Breast epithelium (tissue), 4 donors: ENCODE measurements at regions of chr20 and their contacts with region 1.

Region 1: GRCh38 chr20:44750081-44750805 is 4.6 kb downstream of the KCNK15 start:
- DNase-seq: no peak
- H3K4me3 ChIP-seq: no peak overlapping the region
- H3K27ac ChIP-seq: no peak overlapping the region
- H3K4me1 ChIP-seq: peaks cover 0 to 10% of the 10 kb centered on the region in 2 donors
- H3K27me3 ChIP-seq: peaks cover 0 to 13% of the 10 kb centered on the region in 2 donors
- CTCF ChIP-seq: no peak
- POLR2A ChIP-seq: no peak

Region 2: GRCh38 chr20:43229696-43230095 is 1520.5 kb before region 1 on chr20:
- intact Hi-C with region 1: no loop called
- DNase-seq: no peak
- H3K4me3 ChIP-seq: no peak overlapping the region
- H3K27ac ChIP-seq: no peak overlapping the region
- H3K4me1 ChIP-seq: no peaks in the 10 kb centered on the region
- H3K27me3 ChIP-seq: no peaks in the 10 kb centered on the region
- CTCF ChIP-seq: no peak
- POLR2A ChIP-seq: no peak

Region 3: GRCh38 chr20:43349846-43350245 is 1400.4 kb before region 1 on chr20:
- intact Hi-C with region 1: no loop called
- DNase-seq: no peak
- H3K4me3 ChIP-seq: no peak overlapping the region
- H3K27ac ChIP-seq: no peak overlapping the region
- H3K4me1 ChIP-seq: no peaks in the 10 kb centered on the region
- H3K27me3 ChIP-seq: peaks cover 0 to 4% of the 10 kb centered on the region in 2 donors
- CTCF ChIP-seq: no peak
- POLR2A ChIP-seq: no peak

Region 4: DNA sequence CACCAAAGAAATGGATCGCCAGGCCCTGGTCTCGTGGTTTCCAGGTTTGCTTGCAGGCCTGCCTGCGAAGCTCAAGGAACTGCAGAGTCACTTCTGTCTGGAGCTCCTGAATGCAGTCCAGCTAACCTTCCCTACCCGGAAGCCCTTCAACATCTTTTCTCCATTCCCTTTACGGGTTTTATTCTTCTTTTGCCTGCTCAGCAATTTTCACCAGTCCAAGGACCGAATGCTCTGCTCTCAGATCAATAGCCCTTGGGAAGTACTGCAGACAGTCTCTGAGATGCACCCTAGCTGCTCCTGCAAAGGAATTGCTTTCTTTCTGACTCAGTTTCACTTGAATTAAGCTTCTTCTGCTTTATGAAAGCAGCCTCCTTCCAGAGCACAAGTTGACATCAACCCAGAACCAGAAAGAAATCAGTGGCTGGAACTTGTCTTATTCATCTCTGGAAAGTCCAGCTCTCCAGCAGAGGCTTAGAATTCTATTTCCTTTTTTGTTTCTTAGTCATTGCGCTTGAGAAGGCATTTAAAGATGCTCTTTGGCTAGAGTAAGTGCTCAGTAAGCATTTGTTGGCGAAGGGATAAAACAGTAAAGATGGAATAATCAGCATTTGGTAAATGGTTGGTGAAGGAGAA is 116.6 kb after region 1 on chr20:
- intact Hi-C with region 1: loop called (anchors 5 kb)
- DNase-seq: no peak
- H3K4me3 ChIP-seq: no peak overlapping the region
- H3K27ac ChIP-seq: no peak overlapping the region
- H3K4me1 ChIP-seq: no peaks in the 10 kb centered on the region
- H3K27me3 ChIP-seq: no peaks in the 10 kb centered on the region
- CTCF ChIP-seq: no peak
- POLR2A ChIP-seq: no peak